B cell (primary cell): ENCODE measurements at regions of chr9 and their contacts with region 1.

Region 1: GRCh38 chr9:107243751-107244150 is 39.3 kb upstream of the RAD23B start:
- DNase-seq: no peak
- ATAC-seq: peak; percentile 21
- H3K4me3 ChIP-seq: no peak overlapping the region
- H3K4me3 Mint-ChIP-seq: no peak overlapping the region
- H3K27ac ChIP-seq: no peak overlapping the region
- H3K27ac Mint-ChIP-seq: no peak overlapping the region
- H3K4me1 ChIP-seq: no peaks in the 10 kb centered on the region
- H3K4me1 Mint-ChIP-seq: peaks cover 12% of the 10 kb centered on the region
- H3K27me3 ChIP-seq: no peaks in the 10 kb centered on the region
- H3K27me3 Mint-ChIP-seq: peaks cover 3% of the 10 kb centered on the region
- CTCF ChIP-seq: no peak

Region 2: GRCh38 chr9:107260437-107261086 is 16.8 kb after region 1 on chr9:
- CTCF ChIA-PET with region 1: interaction called, 32 read pairs
- POLR2A ChIA-PET with region 1: no interaction called
- intact Hi-C with region 1: loop called (anchors 1 kb)
- DNase-seq: peak; percentile 83
- ATAC-seq: peak; percentile 95
- H3K4me3 ChIP-seq: peak overlapping the region in 3 of 5 experiments; percentile 20 to 43 (median 23)
- H3K4me3 Mint-ChIP-seq: peak overlapping the region; percentile 81
- H3K27ac ChIP-seq: peak overlapping the region; percentile 57 to 58
- H3K27ac Mint-ChIP-seq: peak overlapping the region; percentile 81
- H3K4me1 ChIP-seq: peaks cover 22 to 26% of the 10 kb centered on the region in 2 donors
- H3K4me1 Mint-ChIP-seq: peaks cover 25% of the 10 kb centered on the region
- H3K27me3 ChIP-seq: no peaks in the 10 kb centered on the region
- H3K27me3 Mint-ChIP-seq: peaks cover 6% of the 10 kb centered on the region
- CTCF ChIP-seq: no peak

Region 3: DNA sequence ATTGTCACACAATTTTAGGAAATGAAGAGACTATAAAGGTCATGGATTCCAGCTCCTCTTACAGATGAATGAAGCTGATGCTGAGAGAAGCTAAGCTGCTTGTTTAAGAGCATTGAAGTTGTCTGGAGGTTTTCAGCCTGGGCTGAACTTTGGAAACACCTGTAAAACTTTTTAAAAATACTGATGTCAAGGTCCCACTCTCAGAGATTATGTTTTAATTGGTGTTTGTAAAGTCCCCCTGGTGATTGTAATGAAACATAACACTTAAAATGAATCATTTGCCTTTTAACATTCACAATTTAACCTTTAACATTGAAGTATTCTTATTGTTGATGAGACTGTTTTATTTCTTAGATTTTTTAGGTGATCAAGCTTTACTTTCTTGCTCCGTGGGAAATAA is 55.7 kb after region 1 on chr9:
- CTCF ChIA-PET with region 1: interaction called, 71 read pairs
- POLR2A ChIA-PET with region 1: no interaction called
- intact Hi-C with region 1: loop called (anchors 1 kb)
- DNase-seq: peak; percentile 24
- ATAC-seq: no peak
- H3K4me3 ChIP-seq: no peak overlapping the region
- H3K4me3 Mint-ChIP-seq: no peak overlapping the region
- H3K27ac ChIP-seq: peak overlapping the region in 1 of 2 donors; percentile 29
- H3K27ac Mint-ChIP-seq: no peak overlapping the region
- H3K4me1 ChIP-seq: peaks cover 5 to 25% of the 10 kb centered on the region in 2 donors
- H3K4me1 Mint-ChIP-seq: peaks cover 43% of the 10 kb centered on the region
- H3K27me3 ChIP-seq: no peaks in the 10 kb centered on the region
- H3K27me3 Mint-ChIP-seq: no peaks in the 10 kb centered on the region
- CTCF ChIP-seq: peak; percentile 65

Region 4: DNA sequence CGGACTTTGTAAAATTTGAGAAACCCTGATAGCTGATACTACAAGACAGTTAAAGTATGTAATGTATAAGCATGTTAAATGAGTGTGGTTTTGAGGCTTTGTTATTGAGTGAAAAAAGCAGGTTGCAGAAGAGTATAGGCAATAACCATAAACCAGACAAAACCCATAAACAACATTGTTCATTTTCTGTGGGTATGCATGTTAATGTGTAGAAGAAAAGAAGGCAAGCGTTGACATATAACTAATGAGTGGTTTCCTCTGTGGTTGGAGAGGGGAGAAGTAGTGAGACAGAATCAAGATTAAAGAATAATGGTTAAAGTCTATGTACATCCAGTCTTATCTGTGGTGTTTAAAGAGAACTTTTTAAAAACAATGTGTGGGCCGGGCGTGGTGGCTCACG is 65.5 kb after region 1 on chr9:
- CTCF ChIA-PET with region 1: interaction called, 13 read pairs
- POLR2A ChIA-PET with region 1: no interaction called
- intact Hi-C with region 1: no loop called
- DNase-seq: no peak
- ATAC-seq: no peak
- H3K4me3 ChIP-seq: no peak overlapping the region
- H3K4me3 Mint-ChIP-seq: no peak overlapping the region
- H3K27ac ChIP-seq: no peak overlapping the region
- H3K27ac Mint-ChIP-seq: no peak overlapping the region
- H3K4me1 ChIP-seq: peaks cover 2 to 5% of the 10 kb centered on the region in 2 donors
- H3K4me1 Mint-ChIP-seq: peaks cover 23% of the 10 kb centered on the region
- H3K27me3 ChIP-seq: no peaks in the 10 kb centered on the region
- H3K27me3 Mint-ChIP-seq: no peaks in the 10 kb centered on the region
- CTCF ChIP-seq: no peak

Region 5: GRCh38 chr9:107323836-107324585 is 80.3 kb after region 1 on chr9:
- CTCF ChIA-PET with region 1: interaction called, 5 read pairs
- POLR2A ChIA-PET with region 1: no interaction called
- intact Hi-C with region 1: loop called (anchors 5 kb)
- DNase-seq: no peak
- ATAC-seq: no peak
- H3K4me3 ChIP-seq: no peak overlapping the region
- H3K4me3 Mint-ChIP-seq: no peak overlapping the region
- H3K27ac ChIP-seq: peak overlapping the region in 1 of 2 donors; percentile 19
- H3K27ac Mint-ChIP-seq: no peak overlapping the region
- H3K4me1 ChIP-seq: no peaks in the 10 kb centered on the region
- H3K4me1 Mint-ChIP-seq: no peaks in the 10 kb centered on the region
- H3K27me3 ChIP-seq: no peaks in the 10 kb centered on the region
- H3K27me3 Mint-ChIP-seq: no peaks in the 10 kb centered on the region
- CTCF ChIP-seq: no peak

Region 6: GRCh38 chr9:107363516-107364152 is 119.9 kb after region 1 on chr9:
- CTCF ChIA-PET with region 1: no interaction called
- POLR2A ChIA-PET with region 1: no interaction called
- intact Hi-C with region 1: no loop called
- DNase-seq: no peak
- ATAC-seq: no peak
- H3K4me3 ChIP-seq: no peak overlapping the region
- H3K4me3 Mint-ChIP-seq: no peak overlapping the region
- H3K27ac ChIP-seq: no peak overlapping the region
- H3K27ac Mint-ChIP-seq: no peak overlapping the region
- H3K4me1 ChIP-seq: no peaks in the 10 kb centered on the region
- H3K4me1 Mint-ChIP-seq: no peaks in the 10 kb centered on the region
- H3K27me3 ChIP-seq: no peaks in the 10 kb centered on the region
- H3K27me3 Mint-ChIP-seq: peaks cover 7% of the 10 kb centered on the region
- CTCF ChIP-seq: no peak